HEK293 (cell line): ENCODE measurements at regions of chr3 and their contacts with region 1.

Region 1: GRCh38 chr3:10738688-10739372 is 77.2 kb upstream of the SLC6A11 start:
- H3K4me3 ChIP-seq: peak overlapping the region; percentile 51
- H3K27ac ChIP-seq: no peak overlapping the region
- H3K4me1 ChIP-seq: no peaks in the 10 kb centered on the region
- CTCF ChIP-seq: peak; percentile 94

Region 2: GRCh38 chr3:10344147-10344943 is 394.5 kb before region 1 on chr3:
- CTCF ChIA-PET with region 1: interaction called, 31 read pairs
- POLR2A ChIA-PET with region 1: no interaction called
- H3K4me3 ChIP-seq: no peak overlapping the region
- H3K27ac ChIP-seq: no peak overlapping the region
- H3K4me1 ChIP-seq: no peaks in the 10 kb centered on the region
- CTCF ChIP-seq: peak; percentile 84

Region 3: DNA sequence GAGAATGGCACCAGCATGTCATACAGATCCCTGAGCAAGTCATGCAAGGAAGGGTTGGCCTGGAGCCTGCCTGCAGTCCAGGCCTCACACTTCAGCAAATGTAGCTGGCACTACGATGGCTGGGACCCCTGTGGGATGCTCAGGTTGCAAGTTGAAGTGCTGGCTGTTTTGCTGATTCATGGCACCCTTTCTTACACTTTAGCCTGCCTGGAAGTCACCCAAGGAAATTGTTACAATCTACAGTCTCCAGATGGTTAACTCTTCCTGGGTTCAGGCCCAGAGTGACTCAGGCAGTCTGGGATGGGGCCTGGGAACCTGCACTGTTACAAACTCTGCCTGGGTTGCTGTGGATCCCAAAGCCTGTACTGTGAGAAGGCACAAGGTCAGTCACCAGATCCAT is 13.8 kb before region 1 on chr3:
- CTCF ChIA-PET with region 1: interaction called, 29 read pairs
- POLR2A ChIA-PET with region 1: no interaction called
- H3K4me3 ChIP-seq: no peak overlapping the region
- H3K27ac ChIP-seq: no peak overlapping the region
- H3K4me1 ChIP-seq: no peaks in the 10 kb centered on the region
- CTCF ChIP-seq: no peak